Activated T-helper 2 cell treated with anti-CD3 and anti-CD28 coated beads, Interferon-gamma antibody, Interleukin-2, Interleukin-4, amounts not matched to agents 10 μg/mL and 5 μg/mL and 100 μg/mL, durations not matched to agents 14 hours and 24 hours and 36 hours (primary cell): ENCODE measurements at regions of chr7 and their contacts with region 1.

Region 1: GRCh38 chr7:28389504-28390395 is 22.6 kb upstream of the CREB5 start:
- DNase-seq: no peak
- H3K4me3 Mint-ChIP-seq: no peak overlapping the region
- H3K27ac Mint-ChIP-seq: no peak overlapping the region
- H3K4me1 Mint-ChIP-seq: no peaks in the 10 kb centered on the region
- H3K27me3 Mint-ChIP-seq: peaks cover 28% of the 10 kb centered on the region

Region 2: DNA sequence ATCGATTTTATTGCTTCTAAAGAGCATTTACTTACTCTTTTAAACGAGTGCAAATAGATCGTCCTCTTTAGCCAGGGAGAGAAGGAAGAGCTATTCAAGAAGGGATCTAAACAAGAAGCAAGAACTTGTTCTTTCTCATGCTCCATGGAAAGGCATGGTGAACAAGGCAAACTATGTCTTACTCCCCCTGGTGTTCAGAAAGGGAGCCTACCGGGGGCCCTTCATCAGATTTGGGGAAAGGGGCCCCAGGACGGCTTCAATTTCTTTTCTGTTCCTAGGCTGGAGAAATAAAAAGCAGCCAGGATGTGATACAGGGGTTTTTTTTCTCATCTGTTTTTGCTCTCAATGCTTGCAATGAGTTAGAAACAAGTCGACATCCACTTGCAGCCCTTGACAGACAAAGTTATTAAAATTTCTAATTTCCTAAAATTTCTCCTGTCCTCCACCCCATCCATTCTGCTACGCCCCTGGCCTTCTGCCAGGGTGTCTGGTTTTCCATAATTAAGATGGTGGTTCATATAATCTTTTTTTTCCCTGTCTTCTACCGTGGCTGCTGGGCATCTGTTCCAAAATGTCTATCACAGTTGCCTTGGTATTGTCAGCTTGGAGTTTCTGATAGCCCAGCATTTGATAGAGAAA is 237.0 kb after region 1 on chr7:
- intact Hi-C with region 1: loop called (anchors 1 kb)
- DNase-seq: no peak
- H3K4me3 Mint-ChIP-seq: no peak overlapping the region
- H3K27ac Mint-ChIP-seq: no peak overlapping the region
- H3K4me1 Mint-ChIP-seq: no peaks in the 10 kb centered on the region
- H3K27me3 Mint-ChIP-seq: no peaks in the 10 kb centered on the region

Region 3: DNA sequence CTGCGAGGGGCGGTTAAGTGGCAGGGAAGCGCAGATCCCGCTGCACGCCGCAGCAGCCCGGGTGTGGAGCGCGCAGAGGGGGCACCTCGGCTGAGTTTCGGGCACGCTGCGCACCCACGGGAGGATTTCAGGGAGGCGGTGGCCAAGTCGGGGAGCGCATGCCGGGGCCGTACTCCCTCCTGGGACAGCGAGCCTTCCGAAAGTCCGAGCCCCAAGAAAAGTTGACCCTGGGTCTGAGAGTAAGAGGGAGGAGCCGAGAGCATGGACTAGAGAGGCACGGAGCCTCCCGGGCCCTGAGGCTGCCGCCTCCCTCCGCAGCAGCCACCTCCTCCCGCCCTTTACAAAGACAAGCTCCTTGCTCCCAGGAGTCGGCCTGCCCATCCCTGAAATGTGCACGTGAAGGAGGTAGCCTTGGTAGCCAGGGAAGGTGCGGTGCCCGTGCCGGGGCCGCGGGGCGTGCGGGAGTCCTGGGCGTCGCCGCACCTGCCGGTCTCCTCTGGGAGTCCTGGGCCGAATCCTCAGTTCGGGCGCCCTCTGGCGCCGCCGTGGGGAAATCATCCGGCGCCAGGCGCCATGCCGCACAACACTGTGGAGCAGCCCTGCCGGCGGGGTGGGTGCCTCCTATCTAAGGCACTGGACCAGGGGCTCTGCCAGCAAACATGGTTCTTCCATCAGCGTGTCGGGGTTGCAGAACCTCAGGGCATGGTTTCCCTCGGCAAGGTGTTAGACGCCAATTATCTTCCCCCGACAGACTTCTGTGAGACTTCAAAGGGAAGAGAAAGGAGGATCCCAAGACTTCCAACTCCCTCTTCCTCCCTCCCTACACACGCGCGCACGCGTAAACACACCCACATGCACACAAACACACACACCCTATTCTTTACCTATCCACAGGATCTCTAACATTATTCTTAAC is 464.3 kb after region 1 on chr7:
- intact Hi-C with region 1: loop called (anchors 1 kb)
- DNase-seq: peak; percentile 54
- H3K4me3 Mint-ChIP-seq: peak overlapping the region; percentile 39
- H3K27ac Mint-ChIP-seq: no peak overlapping the region
- H3K4me1 Mint-ChIP-seq: no peaks in the 10 kb centered on the region
- H3K27me3 Mint-ChIP-seq: peaks cover 42% of the 10 kb centered on the region